GM10248 (cell line): ENCODE measurements at regions of chr15 and their contacts with region 1.

Region 1: DNA sequence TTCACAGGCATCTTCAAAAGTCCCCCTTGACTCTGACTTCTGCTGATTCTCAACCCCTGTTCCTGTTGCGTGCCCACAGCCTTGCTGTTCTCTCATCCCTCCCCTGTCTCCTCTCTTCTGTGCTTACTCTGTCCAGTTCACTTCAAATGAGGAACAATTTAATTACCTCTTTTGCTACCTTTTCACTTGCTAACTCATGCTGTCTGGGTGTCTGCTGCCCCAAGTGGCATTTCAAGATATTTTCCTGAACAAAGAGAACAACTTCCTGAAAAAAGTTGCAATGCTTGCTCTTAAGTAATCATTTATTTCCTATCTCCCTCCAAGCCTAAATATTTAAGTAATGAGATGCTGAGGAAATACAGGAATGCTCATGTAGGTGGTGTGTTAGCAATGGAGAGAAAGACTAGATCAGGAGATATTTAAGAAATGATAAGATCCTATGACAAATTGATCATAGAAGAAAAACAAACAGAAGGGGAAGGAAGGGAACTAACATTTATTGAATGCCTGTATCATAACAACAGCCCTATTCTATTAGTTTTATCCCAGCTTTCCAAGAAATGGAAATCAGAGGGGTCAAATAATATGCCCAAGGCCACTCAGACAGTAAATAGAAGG is 42.2 kb downstream of the SV2B start:
- DNase-seq: peak; percentile 26
- CTCF ChIP-seq: peak; percentile 63

Region 2: DNA sequence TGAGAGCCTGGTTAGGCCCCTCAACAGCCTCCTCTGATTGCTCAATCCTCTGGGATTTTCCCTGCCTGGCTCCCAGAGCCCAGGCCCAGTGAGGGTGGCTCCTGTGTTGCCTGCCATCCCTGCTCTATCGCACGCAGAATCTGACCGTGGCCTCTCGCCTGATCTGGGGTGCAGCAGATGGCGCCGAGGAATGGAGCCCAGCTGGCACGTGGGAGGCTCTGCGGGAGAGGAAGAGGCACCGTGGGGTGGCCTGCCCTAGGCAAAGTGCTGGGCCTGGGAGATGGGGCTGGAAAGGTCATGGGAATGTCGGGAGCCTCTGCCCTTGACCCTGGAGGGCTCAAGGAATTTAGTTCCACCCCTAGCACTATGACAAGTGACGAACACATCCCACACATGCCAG is 31.8 kb before region 1 on chr15:
- CTCF ChIA-PET with region 1: interaction called, 22 read pairs
- POLR2A ChIA-PET with region 1: no interaction called
- DNase-seq: no peak
- CTCF ChIP-seq: no peak

Region 3: DNA sequence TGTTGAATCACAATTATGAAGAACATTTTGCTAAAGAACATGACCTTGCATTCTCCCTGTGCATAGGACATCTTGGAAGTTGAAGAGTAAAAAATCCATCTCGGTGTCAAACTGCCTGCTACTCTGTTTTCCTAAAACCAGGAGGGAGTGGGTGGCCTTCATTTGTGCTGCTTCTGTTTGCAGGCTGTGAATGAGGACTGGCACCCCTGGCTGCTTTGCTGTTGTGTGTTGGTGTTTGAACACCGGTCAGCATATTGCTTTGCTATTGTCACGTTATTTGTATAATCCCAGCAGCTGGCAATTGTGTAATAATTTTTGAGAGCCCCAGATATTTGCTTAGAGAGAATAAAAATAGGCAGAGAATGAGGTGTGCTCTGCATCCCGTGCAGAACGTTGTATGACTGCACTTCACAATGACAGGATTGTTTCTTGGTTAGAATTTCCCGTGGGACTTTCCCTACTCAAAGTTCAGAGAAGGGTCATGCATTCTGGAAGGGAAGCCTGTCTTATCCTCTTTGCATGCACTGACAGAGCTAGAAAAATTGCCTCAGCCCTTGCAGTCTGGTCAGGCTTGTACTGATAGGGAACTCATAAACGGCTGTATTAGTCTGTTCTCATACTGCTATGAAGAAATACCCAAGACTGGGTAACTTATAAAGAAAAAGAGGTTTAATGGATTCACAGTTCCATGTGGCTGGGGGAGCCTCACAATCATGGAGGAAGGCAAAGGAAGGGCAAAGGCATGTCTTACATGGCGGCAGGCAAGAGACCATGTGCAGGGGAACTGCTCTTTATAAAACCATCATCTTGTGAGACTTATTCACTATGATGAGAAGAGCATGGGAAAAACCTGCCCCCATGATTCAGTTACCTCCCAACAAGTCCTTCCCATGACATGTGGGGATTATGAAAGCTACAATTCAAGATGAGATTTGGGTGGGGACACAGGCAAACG is 25.8 kb before region 1 on chr15:
- CTCF ChIA-PET with region 1: interaction called, 28 read pairs
- POLR2A ChIA-PET with region 1: interaction called, 3 read pairs
- DNase-seq: peak; percentile 75
- CTCF ChIP-seq: no peak

Region 4: GRCh38 chr15:91126080-91126479 is 16.1 kb before region 1 on chr15:
- CTCF ChIA-PET with region 1: interaction called, 31 read pairs
- POLR2A ChIA-PET with region 1: no interaction called
- DNase-seq: no peak
- CTCF ChIP-seq: no peak

Region 5: DNA sequence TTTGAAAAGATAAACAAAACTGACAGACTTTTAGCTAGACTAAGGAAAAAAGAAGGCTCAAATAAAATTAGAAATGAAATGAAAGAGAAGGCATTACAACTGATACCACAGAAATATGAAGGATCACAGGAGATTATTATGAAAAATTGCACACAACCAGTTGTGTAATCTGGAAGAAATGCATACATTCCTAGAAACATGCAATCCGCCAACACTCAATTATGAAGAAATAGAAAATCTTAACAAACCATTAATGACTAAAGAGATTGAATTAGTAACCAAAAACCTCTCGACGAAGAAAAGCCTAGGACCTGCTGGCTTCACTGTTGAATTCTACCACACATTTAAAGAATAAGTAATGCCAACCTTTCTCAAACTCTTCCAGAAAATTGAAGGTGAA is 107.4 kb after region 1 on chr15:
- CTCF ChIA-PET with region 1: interaction called, 10 read pairs
- POLR2A ChIA-PET with region 1: no interaction called
- DNase-seq: no peak
- CTCF ChIP-seq: no peak